Prostate gland (tissue), 2 donors: ENCODE measurements at regions of chr4 and their contacts with region 1.

Region 1: GRCh38 chr4:5812506-5813229 is 80.2 kb downstream of the CRMP1 start:
- DNase-seq: peak; percentile 11
- H3K4me3 ChIP-seq: no peak overlapping the region
- H3K27ac ChIP-seq: no peak overlapping the region
- H3K4me1 ChIP-seq: no peaks in the 10 kb centered on the region
- H3K27me3 ChIP-seq: no peaks in the 10 kb centered on the region
- CTCF ChIP-seq: peak; percentile 18 to 72 (median 70)
- POLR2A ChIP-seq: no peak

Region 2: GRCh38 chr4:5050520-5051277 is 762.0 kb before region 1 on chr4:
- intact Hi-C with region 1: loop called (anchors 10 kb)
- DNase-seq: peak; percentile 43
- H3K4me3 ChIP-seq: peak overlapping the region; percentile 27 to 35
- H3K27ac ChIP-seq: no peak overlapping the region
- H3K4me1 ChIP-seq: peaks cover 5% of the 10 kb centered on the region
- H3K27me3 ChIP-seq: no peaks in the 10 kb centered on the region
- CTCF ChIP-seq: peak in 3 of 4 experiments; percentile 51 to 68 (median 61)
- POLR2A ChIP-seq: no peak

Region 3: GRCh38 chr4:5532100-5532499 is 280.6 kb before region 1 on chr4:
- intact Hi-C with region 1: no loop called
- DNase-seq: no peak
- H3K4me3 ChIP-seq: no peak overlapping the region
- H3K27ac ChIP-seq: no peak overlapping the region
- H3K4me1 ChIP-seq: no peaks in the 10 kb centered on the region
- H3K27me3 ChIP-seq: no peaks in the 10 kb centered on the region
- CTCF ChIP-seq: no peak
- POLR2A ChIP-seq: no peak

Region 4: GRCh38 chr4:5970776-5971431 is 158.2 kb after region 1 on chr4:
- intact Hi-C with region 1: no loop called
- DNase-seq: no peak
- H3K4me3 ChIP-seq: no peak overlapping the region
- H3K27ac ChIP-seq: no peak overlapping the region
- H3K4me1 ChIP-seq: no peaks in the 10 kb centered on the region
- H3K27me3 ChIP-seq: peaks cover 4% of the 10 kb centered on the region
- CTCF ChIP-seq: no peak
- POLR2A ChIP-seq: no peak